Heart right ventricle (tissue), 16 donors: ENCODE measurements at regions of chrX and their contacts with region 1.

Region 1: DNA sequence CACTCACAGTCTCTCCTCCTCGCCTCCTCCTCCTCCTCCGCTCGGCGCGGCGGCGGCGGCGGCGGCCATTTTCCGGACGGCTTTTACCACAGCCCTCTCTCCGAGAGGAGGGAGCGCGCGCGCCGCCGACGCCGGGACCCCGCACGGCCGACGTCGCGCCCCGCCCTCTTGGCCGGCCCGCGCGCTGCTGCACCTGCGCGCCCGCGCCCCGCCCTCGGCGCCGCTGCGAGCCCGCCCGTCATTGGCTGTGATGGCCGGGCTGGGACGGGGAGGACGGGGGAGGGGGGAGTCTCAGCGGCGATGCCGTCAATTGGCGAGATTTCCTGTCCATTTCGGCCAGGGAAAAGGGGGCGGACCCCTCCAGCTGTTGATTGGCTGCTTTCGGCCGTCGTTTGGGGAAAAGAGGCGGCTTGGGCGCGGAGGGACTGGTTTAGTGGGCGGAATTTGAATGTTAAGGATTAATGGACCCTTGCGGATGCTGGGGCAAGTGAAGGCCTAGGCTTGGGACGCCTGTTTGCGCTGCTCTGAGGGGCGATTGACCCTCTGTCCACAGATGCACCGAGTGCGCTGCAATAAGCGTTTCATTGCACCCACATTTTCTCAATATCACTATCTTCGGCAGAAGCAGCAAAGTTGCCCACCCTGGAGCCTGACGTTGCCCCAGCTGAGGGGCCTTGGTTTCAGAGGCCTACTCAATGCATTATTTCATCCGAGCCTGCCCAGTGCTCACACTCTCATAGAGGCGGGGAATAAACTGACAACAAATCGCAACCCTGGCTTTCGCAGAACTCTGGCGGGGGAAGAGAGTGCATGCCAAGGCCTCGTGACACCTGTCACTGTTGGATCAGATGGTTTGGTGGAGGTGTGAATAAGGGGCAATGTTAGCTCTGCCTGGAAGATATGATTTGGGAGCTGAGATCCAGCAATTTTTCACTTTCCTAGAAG is at the start of gene MECP2:
- DNase-seq: peak; percentile 90 to 93
- ATAC-seq: peak; percentile 87 to 94 (median 92)
- H3K4me3 ChIP-seq: peak within 1 kb of the TSS; percentile 44 to 81 (median 72)
- H3K27ac ChIP-seq: peak within 1 kb of the TSS; percentile 92 to 98 (median 96)
- H3K4me1 ChIP-seq: peaks cover 2 to 39% (median 33%) of the 10 kb centered on the region in 9 donors
- H3K27me3 ChIP-seq: peaks cover 0 to 57% (median 0%) of the 10 kb centered on the region in 7 donors
- CTCF ChIP-seq: no peak
- total RNA-seq, gene MECP2: 33.5 to 39.3 (median 37.6) TPM

Region 2: GRCh38 chrX:154013614-154014360 is 84.1 kb before region 1 on chrX:
- intact Hi-C with region 1: loop called in 1 of 10 experiments (anchors 5 kb)
- DNase-seq: peak in 1 of 2 donors; percentile 40
- ATAC-seq: peak; percentile 36 to 81 (median 69)
- H3K4me3 ChIP-seq: no peak overlapping the region
- H3K27ac ChIP-seq: no peak overlapping the region
- H3K4me1 ChIP-seq: peaks cover 0 to 9% (median 3%) of the 10 kb centered on the region in 9 donors
- H3K27me3 ChIP-seq: peaks cover 0 to 68% (median 0%) of the 10 kb centered on the region in 7 donors
- CTCF ChIP-seq: peak; percentile 57 to 94 (median 83)